ENCODE measurements at regions of chr20 and their contacts with region 1.

Region 1: DNA sequence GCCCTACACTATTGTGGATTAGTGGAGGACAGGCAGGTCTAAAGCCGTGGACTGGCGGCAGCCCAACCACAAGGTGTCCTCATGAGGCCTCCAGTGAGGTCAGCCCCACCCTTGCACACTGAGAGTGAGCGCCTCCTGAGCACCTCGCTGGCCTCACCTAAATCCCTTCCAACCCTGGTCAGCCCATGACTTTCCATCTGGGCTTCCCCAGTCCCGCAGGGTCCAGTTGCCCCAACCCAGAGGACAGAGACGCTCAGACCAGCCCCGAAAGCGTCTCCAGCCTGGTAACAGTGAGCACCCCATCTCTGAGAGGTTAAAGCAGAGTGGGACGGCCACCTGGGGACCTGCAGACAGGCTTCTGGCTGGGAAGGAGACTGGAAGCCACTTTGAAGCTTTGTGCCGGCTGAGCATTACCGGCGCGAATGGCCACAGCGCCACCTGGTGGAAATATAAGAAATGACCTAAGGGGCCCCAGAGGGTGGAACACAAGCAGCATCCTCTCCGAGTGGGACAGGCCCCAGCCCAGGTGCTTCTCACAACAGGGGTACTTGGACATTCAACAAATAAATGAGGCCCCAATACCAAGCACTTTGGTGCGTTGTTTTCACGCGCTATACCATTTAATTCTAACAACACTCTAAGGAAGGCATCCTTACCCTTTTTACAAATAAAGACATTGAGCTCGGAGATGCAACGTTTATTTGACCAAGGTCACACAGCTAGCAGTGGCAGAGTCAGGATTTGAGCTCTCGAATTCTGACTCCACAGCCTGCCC is 65.7 kb upstream of the TOP1 start:
- DNase-seq: peak; percentile 85
- ATAC-seq: peak; percentile 88
- H3K4me3 Mint-ChIP-seq: no peak overlapping the region
- H3K27ac Mint-ChIP-seq: no peak overlapping the region
- H3K4me1 Mint-ChIP-seq: peaks cover 8% of the 10 kb centered on the region
- H3K27me3 Mint-ChIP-seq: no peaks in the 10 kb centered on the region

Region 2: GRCh38 chr20:39264506-39265172 is 1698.3 kb before region 1 on chr20:
- CTCF ChIA-PET with region 1: interaction called, 3 read pairs
- POLR2A ChIA-PET with region 1: no interaction called
- intact Hi-C with region 1: loop called in 1 of 2 experiments (anchors 5 kb)
- DNase-seq: peak; percentile 73
- ATAC-seq: peak; percentile 89
- H3K4me3 Mint-ChIP-seq: no peak overlapping the region
- H3K27ac Mint-ChIP-seq: no peak overlapping the region
- H3K4me1 Mint-ChIP-seq: peaks cover 2% of the 10 kb centered on the region
- H3K27me3 Mint-ChIP-seq: peaks cover 4% of the 10 kb centered on the region

Region 3: DNA sequence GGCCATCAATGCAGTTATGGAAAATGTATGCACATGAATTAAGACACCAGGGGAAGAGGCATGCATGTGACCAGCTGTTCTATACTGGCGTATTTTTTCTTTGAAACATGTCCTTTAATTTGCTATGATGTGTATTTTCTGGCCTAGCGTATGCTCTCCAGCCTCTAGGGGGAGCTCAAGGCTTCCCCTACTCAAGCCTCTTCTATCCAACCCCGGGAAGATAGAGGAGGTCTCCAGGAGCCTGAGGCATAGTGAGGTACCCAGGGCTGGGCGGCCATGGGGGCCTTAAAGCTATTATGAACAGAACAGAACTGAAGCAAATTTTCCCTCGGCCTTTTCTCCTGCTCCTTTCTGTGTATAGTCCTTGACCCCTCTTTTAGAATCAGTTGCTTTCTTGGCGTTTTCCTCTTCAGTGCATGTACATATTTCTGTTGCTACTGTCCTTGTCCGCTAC is 802.8 kb before region 1 on chr20:
- CTCF ChIA-PET with region 1: no interaction called
- POLR2A ChIA-PET with region 1: no interaction called
- intact Hi-C with region 1: loop called in 1 of 2 experiments (anchors 1 kb)
- DNase-seq: peak; percentile 47
- ATAC-seq: peak; percentile 33
- H3K4me3 Mint-ChIP-seq: no peak overlapping the region
- H3K27ac Mint-ChIP-seq: no peak overlapping the region
- H3K4me1 Mint-ChIP-seq: no peaks in the 10 kb centered on the region
- H3K27me3 Mint-ChIP-seq: no peaks in the 10 kb centered on the region

Region 4: DNA sequence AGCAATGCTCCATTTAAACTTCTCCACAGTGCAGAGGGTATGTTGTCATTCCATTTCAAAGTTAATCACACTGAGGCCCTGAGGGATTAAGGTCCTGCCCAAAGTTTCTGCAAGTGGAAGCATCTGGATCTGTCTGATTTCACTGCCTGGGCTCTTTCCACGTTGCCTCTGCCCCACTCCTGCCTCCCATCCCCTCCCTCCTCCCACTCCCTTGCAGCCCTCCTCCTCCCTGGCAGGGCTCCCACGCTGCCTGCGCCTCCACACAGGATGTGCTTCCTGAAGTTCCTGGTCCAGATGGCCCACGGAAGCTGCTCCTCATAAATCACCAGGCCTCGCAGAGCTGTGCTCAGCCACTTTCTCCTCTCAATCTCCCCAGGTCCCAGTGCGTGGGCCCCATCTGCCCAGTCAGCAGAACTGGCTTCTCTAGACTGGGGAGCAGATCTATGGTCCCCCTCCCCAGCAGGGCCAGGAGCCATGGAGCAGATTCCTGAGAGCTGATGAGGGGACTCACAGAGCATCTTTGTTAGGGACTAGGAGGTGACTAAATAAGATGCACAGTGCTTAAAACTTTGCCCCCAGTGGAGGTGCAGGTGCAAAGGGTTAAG is 208.5 kb before region 1 on chr20:
- CTCF ChIA-PET with region 1: interaction called, 4 read pairs
- POLR2A ChIA-PET with region 1: no interaction called
- intact Hi-C with region 1: loop called in 1 of 2 experiments (anchors 5 kb)
- DNase-seq: no peak
- ATAC-seq: no peak
- H3K4me3 Mint-ChIP-seq: no peak overlapping the region
- H3K27ac Mint-ChIP-seq: no peak overlapping the region
- H3K4me1 Mint-ChIP-seq: peaks cover 20% of the 10 kb centered on the region
- H3K27me3 Mint-ChIP-seq: no peaks in the 10 kb centered on the region

Region 5: DNA sequence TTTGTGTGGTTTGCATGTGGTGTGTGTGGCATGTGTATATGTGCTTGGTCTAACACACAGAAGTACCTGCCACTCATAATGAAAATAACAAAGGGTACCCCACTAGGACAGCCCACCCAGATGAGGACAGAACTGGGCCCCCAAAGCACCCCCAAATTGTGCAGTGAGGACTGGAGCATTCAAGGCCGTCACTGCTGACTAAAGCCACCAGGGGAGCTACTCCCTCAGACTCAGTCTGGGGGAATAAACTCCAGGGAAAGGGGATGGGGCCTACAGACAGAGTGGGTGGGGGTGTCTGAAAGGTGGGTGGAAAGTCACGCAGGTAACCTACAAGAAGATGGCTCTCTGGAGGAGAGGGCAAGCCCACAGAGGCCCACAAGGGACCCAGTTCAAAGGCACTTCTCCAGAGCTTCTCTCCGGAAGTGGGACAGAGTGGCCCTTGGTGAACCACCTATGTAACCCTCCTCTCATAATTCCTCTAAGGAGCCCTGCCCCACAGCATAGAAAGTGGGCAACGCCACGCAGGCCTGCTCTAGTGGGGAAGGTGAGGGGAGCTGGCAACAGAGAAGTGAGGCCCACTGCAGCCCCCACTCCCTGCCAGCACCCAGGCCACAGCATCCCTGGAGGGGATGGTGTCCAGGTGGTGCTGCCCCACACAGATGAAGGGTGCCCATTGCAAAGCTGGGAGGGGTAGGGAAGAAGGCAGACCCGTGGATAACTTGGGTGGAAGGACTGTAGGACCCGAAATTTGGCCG is 151.1 kb before region 1 on chr20:
- CTCF ChIA-PET with region 1: no interaction called
- POLR2A ChIA-PET with region 1: no interaction called
- intact Hi-C with region 1: loop called in 1 of 2 experiments (anchors 10 kb)
- DNase-seq: no peak
- ATAC-seq: no peak
- H3K4me3 Mint-ChIP-seq: no peak overlapping the region
- H3K27ac Mint-ChIP-seq: no peak overlapping the region
- H3K4me1 Mint-ChIP-seq: no peaks in the 10 kb centered on the region
- H3K27me3 Mint-ChIP-seq: no peaks in the 10 kb centered on the region